ENCODE measurements at regions of chr15 and their contacts with region 1.

Region 1: GRCh38 chr15:90886041-90886614 is 1.8 kb downstream of the FES start:
- DNase-seq: peak; percentile 94
- H3K4me3 Mint-ChIP-seq: peak overlapping the region; percentile 55
- H3K27ac Mint-ChIP-seq: peak overlapping the region; percentile 81
- H3K4me1 Mint-ChIP-seq: peaks cover 38% of the 10 kb centered on the region
- H3K27me3 Mint-ChIP-seq: no peaks in the 10 kb centered on the region

Region 2: DNA sequence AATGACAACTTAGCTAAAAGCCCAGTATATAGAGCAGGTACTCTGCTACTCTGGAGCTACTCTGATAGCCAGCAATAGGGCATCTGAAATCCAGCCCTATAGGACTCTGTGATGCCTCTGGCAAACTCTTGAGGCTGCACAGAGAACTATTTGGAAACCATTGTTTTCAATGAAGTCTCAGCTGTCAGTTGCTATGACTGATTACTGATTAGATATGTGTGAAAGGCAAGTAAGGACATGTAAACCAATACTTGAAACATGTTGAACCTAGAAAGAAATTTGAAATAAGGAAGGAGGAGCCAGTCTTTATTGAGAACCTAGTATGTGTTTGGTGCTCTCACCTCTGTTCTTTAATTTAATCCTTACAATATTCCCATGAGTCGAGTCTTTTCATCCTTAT is 396.6 kb before region 1 on chr15:
- intact Hi-C with region 1: loop called (anchors 5 kb)
- DNase-seq: no peak
- H3K4me3 Mint-ChIP-seq: no peak overlapping the region
- H3K27ac Mint-ChIP-seq: no peak overlapping the region
- H3K4me1 Mint-ChIP-seq: peaks cover 20% of the 10 kb centered on the region
- H3K27me3 Mint-ChIP-seq: no peaks in the 10 kb centered on the region

Region 3: GRCh38 chr15:90691982-90692773 is 193.9 kb before region 1 on chr15:
- intact Hi-C with region 1: loop called (anchors 1 kb)
- DNase-seq: no peak
- H3K4me3 Mint-ChIP-seq: no peak overlapping the region
- H3K27ac Mint-ChIP-seq: peak overlapping the region; percentile 11
- H3K4me1 Mint-ChIP-seq: peaks cover 42% of the 10 kb centered on the region
- H3K27me3 Mint-ChIP-seq: no peaks in the 10 kb centered on the region

Region 4: DNA sequence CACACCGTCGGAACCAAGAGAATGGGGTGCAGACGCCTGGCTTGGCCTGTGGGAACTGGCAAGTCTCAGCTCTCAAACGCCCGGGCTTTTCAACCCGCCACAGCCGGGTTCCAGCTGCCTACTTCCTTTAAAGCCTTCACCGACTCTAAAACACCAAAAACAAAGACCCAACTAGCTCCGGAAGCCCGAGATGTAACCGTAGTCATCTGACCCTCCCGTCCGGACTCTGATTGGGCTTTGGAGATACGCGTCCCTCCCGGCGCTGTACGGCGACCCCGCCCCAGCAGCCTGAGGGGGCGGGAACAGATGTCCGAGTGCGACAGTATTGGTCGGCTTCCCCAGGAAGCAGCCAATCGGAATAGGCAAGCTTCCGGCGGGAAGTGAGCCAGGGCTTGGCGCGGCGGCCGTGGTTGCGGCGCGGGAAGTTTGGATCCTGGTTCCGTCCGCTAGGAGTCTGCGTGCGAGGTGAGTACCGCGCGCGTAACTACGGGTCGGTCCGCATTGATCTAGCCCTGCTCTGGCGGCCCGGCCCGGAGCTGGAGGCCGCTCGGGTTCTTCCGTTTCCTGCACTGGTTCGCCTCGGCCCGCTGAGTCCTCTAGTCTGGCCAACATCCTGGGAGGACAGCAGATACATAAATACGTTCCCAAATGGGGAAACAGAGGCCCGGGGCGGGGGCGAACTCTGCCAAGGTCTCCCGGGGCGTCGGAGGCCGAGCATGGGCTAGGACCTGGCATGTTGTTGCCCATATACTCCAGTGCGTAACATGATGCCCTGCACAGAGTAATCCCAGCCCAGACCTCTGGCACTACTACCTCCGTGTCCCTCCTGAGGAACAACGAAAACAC is 168.9 kb before region 1 on chr15 and contains the start of gene BLM:
- intact Hi-C with region 1: loop called (anchors 1 kb)
- DNase-seq: peak; percentile 99
- H3K4me3 Mint-ChIP-seq: peak within 1 kb of the TSS; percentile 88
- H3K27ac Mint-ChIP-seq: peak within 1 kb of the TSS; percentile 96
- H3K4me1 Mint-ChIP-seq: peaks cover 27% of the 10 kb centered on the region
- H3K27me3 Mint-ChIP-seq: no peaks in the 10 kb centered on the region
- total RNA-seq, gene BLM: 64.1 and 66.4 TPM in 2 replicates

Region 5: DNA sequence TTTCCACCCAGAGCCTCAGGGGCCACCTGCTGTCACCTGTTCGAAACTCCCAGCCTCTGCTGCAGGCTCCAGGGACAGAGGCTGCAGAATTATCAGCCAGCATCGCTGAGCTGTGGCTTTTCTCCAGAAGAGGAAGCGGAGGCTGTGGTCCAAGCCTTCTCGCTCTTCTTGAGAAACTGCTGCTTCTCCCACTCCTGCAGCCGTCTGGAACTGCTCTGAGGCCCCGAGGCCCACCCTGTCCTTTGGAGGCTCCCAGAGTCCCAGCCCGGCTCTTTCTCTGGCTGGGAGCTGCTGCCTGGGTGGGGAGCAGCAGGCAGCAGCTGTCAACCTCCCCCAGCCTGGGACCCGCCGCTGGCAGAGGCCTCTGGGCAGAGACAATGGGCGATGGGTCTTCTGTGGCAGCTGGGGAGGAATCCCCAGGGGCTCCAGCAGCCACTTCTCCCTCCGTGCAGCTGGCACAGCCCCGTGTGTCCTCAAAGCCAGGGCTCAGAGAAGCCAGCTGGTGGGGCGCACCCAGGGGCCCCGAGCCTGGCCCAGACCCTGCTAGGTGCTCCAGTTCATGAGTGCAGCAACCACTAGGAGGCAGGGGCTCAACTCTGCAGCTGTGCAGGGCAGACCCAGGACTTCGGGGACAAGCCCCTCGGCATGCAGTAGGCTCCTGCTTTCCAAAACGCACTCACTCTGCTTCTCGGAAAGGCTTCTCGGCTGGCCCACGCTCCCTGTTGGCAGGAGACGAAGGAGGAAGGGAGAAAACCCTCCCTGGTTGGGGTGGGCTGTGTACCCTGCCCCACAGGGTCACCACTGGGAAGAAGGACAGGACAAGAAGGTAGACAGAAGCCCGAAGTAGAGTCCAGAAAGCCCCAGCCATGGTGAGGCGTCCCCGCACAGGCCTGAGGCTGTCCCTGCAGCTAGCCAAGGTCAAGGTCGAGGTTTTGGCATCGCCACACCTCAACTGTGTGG is 67.6 kb before region 1 on chr15:
- intact Hi-C with region 1: loop called (anchors 5 kb)
- DNase-seq: peak; percentile 86
- H3K4me3 Mint-ChIP-seq: peak overlapping the region; percentile 80
- H3K27ac Mint-ChIP-seq: peak overlapping the region; percentile 99
- H3K4me1 Mint-ChIP-seq: peaks cover 69% of the 10 kb centered on the region
- H3K27me3 Mint-ChIP-seq: no peaks in the 10 kb centered on the region

Region 6: DNA sequence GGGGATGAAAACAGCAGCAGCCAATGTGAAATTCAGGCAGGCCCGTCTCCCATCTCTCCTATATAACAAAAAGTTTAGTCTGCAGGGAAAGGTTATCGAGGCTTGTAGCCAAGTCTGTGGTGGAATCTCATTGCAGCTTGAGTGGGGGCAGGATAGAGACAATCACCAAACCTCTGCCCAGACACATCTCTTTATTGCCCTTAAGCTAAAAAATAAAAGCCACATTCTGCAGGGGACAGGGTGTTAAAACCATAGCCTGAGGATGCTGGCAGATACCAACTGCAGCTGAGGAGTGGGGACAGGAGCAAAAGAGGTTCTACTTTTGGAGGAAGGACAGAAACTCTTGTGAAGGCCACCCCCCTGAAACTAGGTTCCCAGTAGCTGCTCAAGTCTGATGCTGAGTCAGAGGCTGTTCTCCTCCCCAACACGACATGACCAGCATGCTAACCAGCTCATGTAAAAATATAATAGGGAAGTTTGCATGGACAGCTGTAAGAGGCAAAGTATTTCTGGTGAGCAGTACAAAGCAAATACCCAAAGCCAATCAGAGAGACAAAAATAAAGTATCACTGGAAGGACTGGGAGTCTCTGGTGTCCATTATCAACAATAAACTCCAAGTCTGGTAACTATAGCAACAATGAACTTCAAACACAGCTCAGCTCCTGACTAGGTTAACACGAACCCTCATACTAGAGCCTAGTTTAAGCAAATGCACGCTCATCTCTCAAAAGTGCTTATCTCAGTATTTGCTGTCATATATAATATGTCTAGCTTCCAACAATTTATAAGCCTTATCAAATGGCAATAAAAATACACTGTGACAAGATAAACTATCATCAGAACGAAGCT is 605.2 kb after region 1 on chr15:
- intact Hi-C with region 1: no loop called
- DNase-seq: peak; percentile 52
- H3K4me3 Mint-ChIP-seq: no peak overlapping the region
- H3K27ac Mint-ChIP-seq: no peak overlapping the region
- H3K4me1 Mint-ChIP-seq: peaks cover 4% of the 10 kb centered on the region
- H3K27me3 Mint-ChIP-seq: peaks cover 8% of the 10 kb centered on the region

Measured in activated CD4-positive, alpha-beta T cell treated with anti-CD3 and anti-CD28 coated beads, Interleukin-2, amount 10 ng/mL, durations not matched to agents 24 days and 14 days (primary cell).